CD4-positive, alpha-beta T cell (primary cell): ENCODE measurements at regions of chr11 and their contacts with region 1.

Region 1: DNA sequence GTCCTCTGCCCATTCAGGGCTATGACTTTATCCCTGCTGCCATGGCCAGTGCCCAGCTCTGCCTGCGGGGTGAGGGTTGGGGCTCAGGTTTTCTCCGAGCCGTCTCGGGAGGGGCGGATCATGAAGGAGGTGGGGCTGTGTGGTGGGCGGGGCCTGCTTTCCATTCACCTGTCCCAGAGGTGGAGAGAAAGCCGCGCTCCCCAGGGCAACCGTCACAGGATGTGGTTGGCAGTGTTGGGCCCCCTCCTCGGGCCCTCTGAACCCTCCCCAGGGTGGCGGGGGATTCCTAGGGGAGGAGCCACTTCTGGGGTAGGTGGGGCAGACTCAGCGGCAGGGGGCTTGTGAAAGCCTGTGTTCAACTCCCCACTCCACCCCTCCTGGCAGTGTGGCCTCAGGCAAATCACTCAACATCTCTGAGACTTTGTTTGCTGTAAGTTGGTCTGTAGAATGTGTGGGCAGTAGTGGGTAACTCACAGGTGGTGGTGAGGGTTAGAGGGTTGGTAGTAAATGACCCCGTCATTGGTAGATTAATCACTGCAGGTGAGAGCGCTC is 50.3 kb downstream of the CD6 start:
- DNase-seq: peak; percentile 82 to 97 (median 92)
- ATAC-seq: peak; percentile 71
- H3K4me3 ChIP-seq: peak overlapping the region; percentile 21
- H3K4me3 Mint-ChIP-seq: peak overlapping the region; percentile 87
- H3K27ac ChIP-seq: peak overlapping the region; percentile 81 to 88
- H3K27ac Mint-ChIP-seq: peak overlapping the region; percentile 99
- H3K4me1 ChIP-seq: peaks cover 85% of the 10 kb centered on the region
- H3K4me1 Mint-ChIP-seq: peaks cover 85% of the 10 kb centered on the region
- H3K27me3 ChIP-seq: no peaks in the 10 kb centered on the region
- H3K27me3 Mint-ChIP-seq: no peaks in the 10 kb centered on the region
- CTCF ChIP-seq: no peak

Region 2: DNA sequence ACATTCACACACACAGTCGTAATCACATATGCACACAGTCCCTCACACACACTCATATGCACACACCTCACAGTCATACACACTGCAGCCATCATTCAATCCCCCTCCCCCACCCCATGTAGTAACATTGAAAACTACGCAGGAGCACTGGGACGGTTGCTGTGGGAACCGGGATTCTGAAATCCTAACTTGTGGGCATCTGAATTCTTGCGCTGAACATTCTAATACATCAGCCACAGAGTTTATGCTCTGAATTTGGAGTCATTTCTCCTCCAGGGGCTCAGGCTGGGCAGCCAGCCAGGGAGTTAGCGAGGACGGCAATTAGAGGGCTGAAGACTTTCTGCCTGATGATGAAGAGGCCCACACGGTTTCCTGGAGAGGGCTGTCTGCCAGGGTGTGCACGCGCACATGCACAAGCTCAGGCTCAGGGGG is 17.5 kb before region 1 on chr11:
- CTCF ChIA-PET with region 1: interaction called, 3 read pairs
- POLR2A ChIA-PET with region 1: interaction called, 34 read pairs
- intact Hi-C with region 1: loop called in 1 of 2 experiments (anchors 2 kb)
- DNase-seq: peak in 11 of 14 experiments; percentile 40 to 73 (median 55)
- ATAC-seq: peak; percentile 59
- H3K4me3 ChIP-seq: peak overlapping the region; percentile 30
- H3K4me3 Mint-ChIP-seq: peak overlapping the region; percentile 86
- H3K27ac ChIP-seq: peak overlapping the region; percentile 63 to 71
- H3K27ac Mint-ChIP-seq: peak overlapping the region; percentile 95
- H3K4me1 ChIP-seq: peaks cover 89% of the 10 kb centered on the region
- H3K4me1 Mint-ChIP-seq: peaks cover 92% of the 10 kb centered on the region
- H3K27me3 ChIP-seq: no peaks in the 10 kb centered on the region
- H3K27me3 Mint-ChIP-seq: no peaks in the 10 kb centered on the region
- CTCF ChIP-seq: no peak

Region 3: DNA sequence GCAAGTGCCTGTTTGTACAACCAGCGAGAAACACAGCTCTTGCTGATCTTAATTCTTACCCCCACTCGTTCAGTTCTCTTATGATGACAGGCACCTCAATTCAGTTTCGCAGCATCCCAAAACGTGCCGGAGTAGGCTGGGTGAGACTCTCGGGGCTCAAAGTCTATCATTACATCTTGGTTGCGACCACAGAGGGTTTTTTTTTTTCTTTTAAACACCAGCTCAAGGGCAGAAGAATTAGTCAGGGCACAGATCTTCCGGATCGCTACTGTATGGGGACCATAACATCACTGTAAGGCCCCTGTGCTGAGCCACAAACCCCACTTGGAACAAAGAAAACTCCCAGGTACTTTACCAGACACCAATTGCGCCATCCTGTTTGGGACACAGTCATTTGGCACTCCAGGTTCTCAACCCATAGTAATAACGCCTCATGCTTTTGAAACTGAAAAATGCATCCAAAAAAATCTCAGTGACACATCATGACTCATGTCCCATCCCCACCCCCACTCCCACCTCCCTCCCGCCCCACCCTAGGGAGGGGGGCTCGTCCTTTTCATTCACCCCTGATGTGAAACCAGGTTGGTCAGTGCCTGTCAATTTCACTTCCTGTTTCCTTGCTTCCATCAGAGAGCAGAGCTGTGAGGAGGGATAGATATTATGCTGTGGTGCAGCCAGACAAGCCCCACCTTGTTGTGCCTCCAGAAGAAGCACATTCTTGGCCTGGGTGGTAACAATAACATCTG is 39.5 kb after region 1 on chr11:
- CTCF ChIA-PET with region 1: interaction called, 3 read pairs
- POLR2A ChIA-PET with region 1: interaction called, 18 read pairs
- intact Hi-C with region 1: loop called in 1 of 2 experiments (anchors 2 kb)
- DNase-seq: peak; percentile 43 to 92 (median 72)
- ATAC-seq: peak; percentile 78
- H3K4me3 ChIP-seq: peak overlapping the region; percentile 36
- H3K4me3 Mint-ChIP-seq: peak overlapping the region; percentile 82
- H3K27ac ChIP-seq: peak overlapping the region; percentile 74 to 85
- H3K27ac Mint-ChIP-seq: peak overlapping the region; percentile 92
- H3K4me1 ChIP-seq: peaks cover 82% of the 10 kb centered on the region
- H3K4me1 Mint-ChIP-seq: peaks cover 76% of the 10 kb centered on the region
- H3K27me3 ChIP-seq: no peaks in the 10 kb centered on the region
- H3K27me3 Mint-ChIP-seq: no peaks in the 10 kb centered on the region
- CTCF ChIP-seq: no peak

Region 4: DNA sequence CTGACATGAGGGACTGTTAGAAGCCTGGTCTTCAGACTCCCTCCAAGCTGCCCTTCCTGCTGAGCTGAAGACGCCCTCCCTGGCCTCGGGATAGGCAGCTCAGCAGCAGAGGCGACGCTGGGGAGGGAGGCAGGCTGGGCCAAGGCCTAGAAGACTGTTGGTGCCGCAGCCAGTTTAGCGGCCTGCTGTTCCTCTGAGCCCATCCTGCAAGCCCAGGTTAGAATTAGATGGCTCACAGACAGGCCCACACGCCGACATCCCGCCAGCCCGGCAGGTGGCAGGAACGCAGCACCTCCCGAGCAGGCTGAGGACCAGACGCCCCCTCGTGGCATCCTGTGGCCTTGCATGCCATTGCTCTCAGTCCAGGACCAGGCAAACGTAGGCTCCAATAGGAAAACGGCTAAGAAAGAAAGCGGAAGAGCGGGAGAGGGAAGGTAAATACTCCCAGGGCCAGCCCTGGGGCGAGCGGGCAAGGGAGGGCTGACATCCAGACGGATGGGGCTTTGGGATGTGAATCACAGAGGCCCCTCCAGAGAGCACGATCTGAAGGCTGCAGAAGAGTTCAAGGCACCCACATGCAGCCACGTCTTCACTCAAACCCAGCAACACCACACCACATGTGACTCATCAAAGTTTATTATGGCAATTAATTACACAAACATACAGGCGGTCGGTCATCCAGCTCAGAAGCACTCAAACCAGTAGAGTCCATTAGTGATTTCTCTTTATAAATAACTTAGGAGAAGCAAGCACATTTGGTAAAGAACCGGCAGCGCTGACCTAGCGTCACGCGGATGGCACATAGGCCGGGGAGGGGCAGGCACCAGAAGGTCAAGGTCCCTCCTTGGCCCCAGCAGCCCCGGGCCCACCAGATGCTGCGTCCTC is 108.1 kb after region 1 on chr11:
- CTCF ChIA-PET with region 1: no interaction called
- POLR2A ChIA-PET with region 1: interaction called, 5 read pairs
- intact Hi-C with region 1: loop called in 1 of 2 experiments (anchors 5 kb)
- DNase-seq: peak; percentile 86 to 94 (median 88)
- ATAC-seq: peak; percentile 84
- H3K4me3 ChIP-seq: no peak overlapping the region
- H3K4me3 Mint-ChIP-seq: peak overlapping the region; percentile 52
- H3K27ac ChIP-seq: peak overlapping the region; percentile 29 to 50
- H3K27ac Mint-ChIP-seq: peak overlapping the region; percentile 50
- H3K4me1 ChIP-seq: peaks cover 25% of the 10 kb centered on the region
- H3K4me1 Mint-ChIP-seq: peaks cover 39% of the 10 kb centered on the region
- H3K27me3 ChIP-seq: no peaks in the 10 kb centered on the region
- H3K27me3 Mint-ChIP-seq: no peaks in the 10 kb centered on the region
- CTCF ChIP-seq: peak; percentile 99